ENCODE measurements at regions of chr18 and their contacts with region 1.

Region 1: DNA sequence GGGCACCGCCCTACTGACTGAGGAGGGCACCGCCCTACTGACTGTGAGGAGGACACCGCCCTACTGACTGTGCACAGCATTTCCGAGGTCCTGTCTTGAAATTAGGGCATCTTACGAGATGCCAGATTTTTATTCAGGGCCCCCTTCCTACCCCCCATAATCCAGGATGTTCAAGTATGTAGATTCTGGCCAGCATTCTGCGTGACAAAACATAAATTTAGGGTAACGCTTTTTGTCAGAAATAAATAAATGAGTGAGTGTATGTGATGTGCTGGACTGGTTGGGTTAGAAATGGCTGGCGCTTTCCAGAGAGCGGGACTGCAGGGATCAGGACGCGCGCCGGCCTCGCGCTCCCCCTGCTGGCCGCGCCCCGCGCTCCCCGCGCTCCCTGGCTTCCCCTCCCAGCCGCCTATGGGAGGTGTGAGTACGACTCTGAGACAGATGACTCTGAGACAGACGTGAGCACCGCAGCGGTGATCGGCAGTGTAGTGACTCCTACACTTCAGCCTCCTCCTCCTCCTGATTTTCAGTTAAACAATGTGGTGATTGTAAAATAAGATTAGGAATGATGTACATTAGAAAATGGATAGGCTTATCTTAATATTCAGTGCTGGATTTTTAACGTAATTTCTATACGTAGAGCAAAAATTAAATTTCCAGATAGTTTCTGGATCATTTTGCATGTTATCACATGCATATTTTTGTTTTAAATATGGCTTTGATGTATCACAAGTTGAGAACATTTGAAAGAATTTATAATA is 149.2 kb upstream of the NFATC1 start:
- DNase-seq: peak; percentile 89
- ATAC-seq: peak; percentile 98
- H3K4me3 Mint-ChIP-seq: peak overlapping the region; percentile 66
- H3K27ac Mint-ChIP-seq: peak overlapping the region; percentile 73
- H3K4me1 Mint-ChIP-seq: peaks cover 12% of the 10 kb centered on the region
- H3K27me3 Mint-ChIP-seq: no peaks in the 10 kb centered on the region

Region 2: GRCh38 chr18:78138983-78139496 is 1107.5 kb before region 1 on chr18:
- CTCF ChIA-PET with region 1: no interaction called
- POLR2A ChIA-PET with region 1: no interaction called
- intact Hi-C with region 1: no loop called
- DNase-seq: no peak
- ATAC-seq: no peak
- H3K4me3 Mint-ChIP-seq: no peak overlapping the region
- H3K27ac Mint-ChIP-seq: no peak overlapping the region
- H3K4me1 Mint-ChIP-seq: no peaks in the 10 kb centered on the region
- H3K27me3 Mint-ChIP-seq: peaks cover 3% of the 10 kb centered on the region

Region 3: DNA sequence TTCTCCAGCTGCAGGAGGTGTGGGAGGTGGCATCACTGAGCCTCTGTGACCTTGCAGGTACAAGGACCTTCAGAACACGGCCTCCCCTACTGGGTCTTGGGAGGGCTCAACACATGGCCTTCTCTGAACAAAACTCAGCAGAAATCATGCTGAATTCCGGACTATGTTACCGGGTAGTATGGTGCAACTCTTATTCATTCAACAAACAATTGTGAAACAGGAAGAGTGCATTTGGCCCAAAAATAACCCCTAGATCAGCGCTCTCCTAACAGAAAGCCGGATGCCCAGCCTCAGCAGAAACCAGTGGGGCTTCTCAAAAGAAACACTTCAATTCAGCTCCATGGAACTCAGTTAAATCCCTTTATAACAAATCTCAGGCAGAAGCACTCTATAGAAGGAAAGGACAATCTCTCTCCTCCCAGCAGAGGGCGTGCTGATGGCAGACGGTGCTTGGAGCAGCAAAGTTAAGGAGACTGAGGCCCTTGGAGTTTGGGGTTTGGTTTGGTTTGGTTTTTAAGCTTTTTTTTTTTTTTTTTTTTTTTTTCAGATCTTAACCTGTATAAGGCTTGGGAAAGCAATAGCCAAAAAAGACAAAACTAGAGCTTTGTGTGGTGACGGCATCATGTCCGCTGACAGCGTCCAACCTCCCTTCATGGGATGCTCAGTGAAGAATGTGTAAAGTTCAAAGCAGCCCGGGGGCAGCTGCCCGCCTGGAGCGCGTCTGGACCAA is 371.1 kb before region 1 on chr18:
- CTCF ChIA-PET with region 1: interaction called, 3 read pairs
- POLR2A ChIA-PET with region 1: no interaction called
- intact Hi-C with region 1: loop called (anchors 1 to 10 kb)
- DNase-seq: peak; percentile 65
- ATAC-seq: peak; percentile 39
- H3K4me3 Mint-ChIP-seq: no peak overlapping the region
- H3K27ac Mint-ChIP-seq: no peak overlapping the region
- H3K4me1 Mint-ChIP-seq: no peaks in the 10 kb centered on the region
- H3K27me3 Mint-ChIP-seq: peaks cover 12% of the 10 kb centered on the region

Region 4: GRCh38 chr18:78979056-78979672 is 267.4 kb before region 1 on chr18:
- CTCF ChIA-PET with region 1: no interaction called
- POLR2A ChIA-PET with region 1: no interaction called
- intact Hi-C with region 1: loop called in 1 of 2 experiments (anchors 2 kb)
- DNase-seq: no peak
- ATAC-seq: no peak
- H3K4me3 Mint-ChIP-seq: no peak overlapping the region
- H3K27ac Mint-ChIP-seq: no peak overlapping the region
- H3K4me1 Mint-ChIP-seq: peaks cover 17% of the 10 kb centered on the region
- H3K27me3 Mint-ChIP-seq: peaks cover 60% of the 10 kb centered on the region

Region 5: GRCh38 chr18:78984941-78985784 is 261.4 kb before region 1 on chr18:
- CTCF ChIA-PET with region 1: no interaction called
- POLR2A ChIA-PET with region 1: no interaction called
- intact Hi-C with region 1: loop called (anchors 1 to 2 kb)
- DNase-seq: peak; percentile 52
- ATAC-seq: peak; percentile 63
- H3K4me3 Mint-ChIP-seq: no peak overlapping the region
- H3K27ac Mint-ChIP-seq: no peak overlapping the region
- H3K4me1 Mint-ChIP-seq: peaks cover 5% of the 10 kb centered on the region
- H3K27me3 Mint-ChIP-seq: peaks cover 54% of the 10 kb centered on the region

Region 6: DNA sequence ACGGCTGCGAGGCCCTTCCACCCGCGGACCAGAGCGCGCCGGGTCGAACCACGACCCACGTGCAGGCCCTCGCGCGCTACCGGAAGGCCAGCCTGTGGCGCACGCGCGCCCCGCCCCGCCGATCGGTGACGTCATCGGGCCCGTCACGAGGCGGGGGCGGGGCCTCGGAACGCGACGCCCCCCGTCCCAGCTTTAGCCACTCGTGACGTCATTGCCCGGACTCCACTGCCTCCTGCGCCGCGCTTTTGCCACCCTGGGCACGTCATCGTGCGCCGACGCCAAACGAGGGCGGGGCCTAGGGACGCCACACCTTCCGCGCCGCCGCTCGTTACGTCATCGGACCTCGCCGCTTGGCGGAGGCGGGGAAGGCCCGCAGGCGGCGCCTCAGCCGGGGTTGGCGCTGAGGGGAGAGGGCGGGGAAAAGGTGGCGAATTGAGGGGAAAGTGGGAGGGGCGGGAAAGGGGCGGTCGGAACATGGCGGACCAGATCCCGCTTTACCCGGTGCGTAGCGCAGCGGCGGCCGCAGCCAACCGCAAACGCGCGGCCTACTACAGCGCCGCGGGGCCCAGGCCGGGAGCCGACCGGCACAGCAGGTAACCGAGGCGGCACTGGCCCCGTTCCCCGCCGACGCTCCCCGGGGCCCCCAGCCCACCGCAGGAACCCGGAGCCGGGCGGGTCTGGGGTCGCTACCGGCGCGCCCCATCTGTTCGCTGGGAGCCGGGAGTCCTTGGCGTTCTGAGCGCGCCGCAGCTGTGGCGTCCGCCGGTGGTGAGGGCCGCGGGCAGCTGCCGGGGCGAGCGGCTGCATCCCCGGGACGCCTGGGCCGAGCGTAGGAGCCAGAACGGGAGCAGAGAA is 177.4 kb before region 1 on chr18 and contains the start of gene ATP9B:
- CTCF ChIA-PET with region 1: no interaction called
- POLR2A ChIA-PET with region 1: no interaction called
- intact Hi-C with region 1: loop called (anchors 1 kb)
- DNase-seq: peak; percentile 99
- ATAC-seq: peak; percentile 83
- H3K4me3 Mint-ChIP-seq: peak within 1 kb of the TSS; percentile 87
- H3K27ac Mint-ChIP-seq: peak within 1 kb of the TSS; percentile 99
- H3K4me1 Mint-ChIP-seq: peaks cover 38% of the 10 kb centered on the region
- H3K27me3 Mint-ChIP-seq: peaks cover 11% of the 10 kb centered on the region
- total RNA-seq, gene ATP9B: 19.4 to 20.8 TPM

Region 7: DNA sequence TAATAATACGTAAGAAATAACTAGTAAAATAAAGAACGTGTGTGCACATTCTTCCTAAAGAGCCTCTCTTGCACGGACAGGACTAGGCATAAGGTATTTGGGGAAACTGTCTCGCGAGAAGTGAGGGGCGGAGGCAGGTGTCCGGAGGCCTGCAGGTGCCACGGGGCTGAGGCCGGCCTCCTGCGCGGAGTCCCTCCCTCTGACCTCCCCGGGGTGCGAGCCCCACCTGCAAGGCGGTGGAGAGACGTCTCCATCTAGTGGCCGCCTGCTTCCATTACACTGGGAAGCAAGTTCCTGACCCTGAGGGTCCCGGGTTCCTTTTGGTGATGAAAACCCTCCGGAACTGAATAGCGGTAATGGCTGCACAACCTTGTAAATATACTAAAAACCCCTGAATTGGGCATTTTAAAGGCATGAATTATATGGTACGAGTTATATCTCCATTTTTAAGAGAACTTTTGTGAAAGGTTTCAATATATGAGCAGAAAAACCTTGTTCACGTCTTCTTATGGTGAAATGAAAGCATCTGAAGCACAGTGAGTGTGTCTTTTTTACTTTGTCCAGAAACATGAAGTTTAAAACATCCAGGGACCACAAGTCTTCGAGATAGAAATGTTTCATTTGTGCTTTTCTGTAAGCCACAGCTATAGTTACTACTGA is 397.6 kb after region 1 on chr18:
- CTCF ChIA-PET with region 1: no interaction called
- POLR2A ChIA-PET with region 1: no interaction called
- intact Hi-C with region 1: loop called in 1 of 2 experiments (anchors 5 kb)
- DNase-seq: peak; percentile 86
- ATAC-seq: peak; percentile 90
- H3K4me3 Mint-ChIP-seq: no peak overlapping the region
- H3K27ac Mint-ChIP-seq: no peak overlapping the region
- H3K4me1 Mint-ChIP-seq: peaks cover 6% of the 10 kb centered on the region
- H3K27me3 Mint-ChIP-seq: peaks cover 9% of the 10 kb centered on the region